ENCODE measurements at regions of chr1 and their contacts with region 1.

Region 1: GRCh38 chr1:179081687-179082332 is at the start of gene TOR3A:
- DNase-seq: peak; percentile 97
- H3K4me3 ChIP-seq: peak within 1 kb of the TSS; percentile 64 to 94 (median 86)
- H3K27ac ChIP-seq: peak within 1 kb of the TSS; percentile 84 to 92 (median 91)
- H3K4me1 ChIP-seq: peaks cover 0 to 24% (median 20%) of the 10 kb centered on the region in 4 donors
- H3K27me3 ChIP-seq: no peaks in the 10 kb centered on the region
- CTCF ChIP-seq: no peak
- EP300 ChIP-seq: no peak
- POLR2A ChIP-seq: peak; percentile 53 to 74
- total RNA-seq, gene TOR3A: 38.8 to 53.5 (median 39.9) TPM

Region 2: GRCh38 chr1:178243890-178244289 is 837.9 kb before region 1 on chr1:
- intact Hi-C with region 1: no loop called
- DNase-seq: no peak
- H3K4me3 ChIP-seq: no peak overlapping the region
- H3K27ac ChIP-seq: no peak overlapping the region
- H3K4me1 ChIP-seq: peaks cover 0 to 12% (median 10%) of the 10 kb centered on the region in 4 donors
- H3K27me3 ChIP-seq: no peaks in the 10 kb centered on the region
- CTCF ChIP-seq: no peak
- EP300 ChIP-seq: no peak
- POLR2A ChIP-seq: no peak

Region 3: DNA sequence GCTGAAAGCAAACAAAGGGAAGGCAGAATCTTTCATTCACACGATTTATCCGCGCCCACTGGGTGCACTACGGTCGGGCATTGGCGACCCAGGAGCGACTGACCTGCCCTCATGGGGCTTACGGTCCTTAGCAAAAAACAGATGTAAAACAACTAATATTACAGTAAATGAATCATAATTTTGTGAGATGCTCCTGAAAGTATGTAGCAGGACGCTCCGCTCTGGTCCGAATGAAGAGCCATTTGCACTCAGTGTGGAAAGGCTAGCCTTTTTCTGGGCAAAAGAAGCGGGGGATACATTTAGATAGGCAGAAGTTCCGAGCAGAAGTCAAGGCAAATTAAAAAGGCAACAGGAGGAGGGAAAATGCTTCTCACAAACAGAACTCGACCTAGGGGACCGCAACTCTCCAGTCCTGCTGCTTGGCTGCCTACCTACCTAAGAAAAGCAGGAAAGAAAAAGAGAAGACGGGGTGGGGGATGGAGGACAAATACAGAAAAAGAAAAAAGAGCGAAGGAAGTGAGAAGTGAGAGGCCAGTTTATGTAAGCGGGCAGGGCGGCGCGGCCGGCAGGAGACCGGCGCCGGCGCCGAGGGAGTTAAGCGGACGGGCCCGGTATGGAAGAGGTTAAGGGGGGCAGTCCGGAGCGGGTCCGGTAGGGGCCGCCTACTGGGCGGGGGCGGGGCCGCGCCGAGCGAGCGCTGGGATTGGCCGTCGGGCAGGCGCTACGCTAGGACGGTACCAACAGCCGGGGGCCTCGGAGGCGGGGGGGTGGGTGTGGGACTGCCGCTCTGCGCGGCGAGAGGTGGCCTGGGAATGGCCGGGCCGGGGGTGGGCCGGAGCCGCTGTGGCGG is 56.5 kb before region 1 on chr1 and contains the start of gene FAM20B:
- intact Hi-C with region 1: loop called (anchors 5 kb)
- DNase-seq: peak; percentile 97
- H3K4me3 ChIP-seq: peak within 1 kb of the TSS; percentile 78 to 97 (median 94)
- H3K27ac ChIP-seq: peak within 1 kb of the TSS; percentile 93 to 99 (median 98)
- H3K4me1 ChIP-seq: peaks cover 0 to 42% (median 33%) of the 10 kb centered on the region in 4 donors
- H3K27me3 ChIP-seq: no peaks in the 10 kb centered on the region
- CTCF ChIP-seq: no peak
- EP300 ChIP-seq: no peak
- POLR2A ChIP-seq: no peak
- total RNA-seq, gene FAM20B: 36.3 to 51.0 (median 48.3) TPM